ENCODE measurements at regions of chr1 and their contacts with region 1.

Region 1: DNA sequence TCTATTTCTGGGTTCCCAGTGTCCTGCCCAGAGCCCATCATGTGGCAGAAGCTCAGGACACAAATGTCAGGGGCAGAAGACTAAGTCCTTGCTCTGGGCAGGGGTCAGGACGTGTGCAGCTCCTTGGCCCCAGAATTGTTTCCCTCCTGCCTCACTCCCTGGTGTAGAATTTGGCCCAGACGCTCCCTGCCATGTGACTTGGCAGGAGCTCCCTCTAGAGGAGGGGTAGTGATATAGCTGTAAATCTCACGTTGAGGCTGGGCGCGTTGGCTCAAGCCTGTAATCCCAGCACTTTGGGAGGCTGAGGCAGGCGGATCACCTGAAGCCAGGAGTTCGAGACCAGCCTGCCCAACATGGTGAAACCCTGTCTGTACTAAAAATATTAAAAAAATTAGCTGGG is 91.2 kb downstream of the UBIAD1 start:
- DNase-seq: peak in 1 of 2 experiments; percentile 18
- H3K4me3 ChIP-seq: no peak overlapping the region
- H3K4me3 Mint-ChIP-seq: no peak overlapping the region
- H3K27ac Mint-ChIP-seq: no peak overlapping the region
- H3K4me1 ChIP-seq: peaks cover 12% of the 10 kb centered on the region
- H3K4me1 Mint-ChIP-seq: peaks cover 13% of the 10 kb centered on the region
- H3K27me3 ChIP-seq: no peaks in the 10 kb centered on the region
- H3K27me3 Mint-ChIP-seq: no peaks in the 10 kb centered on the region
- CTCF ChIP-seq: peak; percentile 35 to 41

Region 2: DNA sequence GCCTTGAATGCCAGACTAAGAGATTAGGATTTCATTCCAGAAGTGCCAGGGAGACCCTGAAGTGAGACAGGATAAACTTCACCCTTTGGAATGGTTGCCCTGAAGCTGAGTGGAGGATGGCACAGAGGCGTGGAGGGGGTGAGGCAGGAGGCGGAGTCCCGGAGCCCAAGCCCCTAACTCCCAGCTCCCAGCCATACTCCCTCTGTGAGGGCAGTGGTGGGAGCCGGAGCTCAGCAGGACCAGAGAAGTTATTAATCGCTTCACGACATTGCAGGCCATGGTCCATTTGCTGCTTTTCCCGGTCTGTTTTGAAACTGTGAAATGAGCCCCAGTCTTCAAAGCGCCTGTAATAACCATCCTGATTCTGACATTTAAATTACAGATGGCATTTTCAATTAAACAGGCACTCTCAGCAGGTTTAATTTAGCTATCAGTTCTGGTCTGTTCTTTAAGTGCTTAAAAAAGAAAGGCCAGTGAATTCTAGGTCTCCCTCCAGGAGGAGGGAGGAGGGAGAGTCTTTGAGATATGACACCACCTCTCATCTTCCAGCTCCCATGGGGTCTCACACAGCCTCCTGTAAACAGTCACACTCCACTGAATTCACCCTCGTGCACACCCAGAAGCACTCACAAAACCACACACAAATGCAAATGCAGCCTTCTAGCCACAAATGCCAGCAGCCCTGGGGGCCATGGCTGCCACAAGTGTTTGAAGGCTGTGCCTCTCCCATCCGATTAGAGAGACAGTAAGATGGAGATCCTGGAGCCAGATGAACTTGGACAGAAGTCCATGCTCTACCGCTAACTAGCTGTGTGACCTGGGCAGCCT is 270.4 kb after region 1 on chr1:
- CTCF ChIA-PET with region 1: interaction called, 11 read pairs
- POLR2A ChIA-PET with region 1: no interaction called
- intact Hi-C with region 1: no loop called
- DNase-seq: no peak
- H3K4me3 ChIP-seq: no peak overlapping the region
- H3K4me3 Mint-ChIP-seq: no peak overlapping the region
- H3K27ac Mint-ChIP-seq: no peak overlapping the region
- H3K4me1 ChIP-seq: no peaks in the 10 kb centered on the region
- H3K4me1 Mint-ChIP-seq: no peaks in the 10 kb centered on the region
- H3K27me3 ChIP-seq: no peaks in the 10 kb centered on the region; the same call in 1 of the 2 replicates
- H3K27me3 Mint-ChIP-seq: peaks cover 11% of the 10 kb centered on the region
- CTCF ChIP-seq: no peak

Measured in Caco-2 (cell line).